ENCODE measurements at regions of chr7 and their contacts with region 1.

Region 1: GRCh38 chr7:114825423-114825951 is 96.4 kb upstream of the MDFIC start:
- DNase-seq: peak; percentile 41
- H3K4me3 Mint-ChIP-seq: peak overlapping the region; percentile 7
- H3K27ac Mint-ChIP-seq: peak overlapping the region; percentile 95
- H3K4me1 Mint-ChIP-seq: peaks cover 28% of the 10 kb centered on the region
- H3K27me3 Mint-ChIP-seq: no peaks in the 10 kb centered on the region

Region 2: GRCh38 chr7:114799628-114800028 is 25.9 kb before region 1 on chr7:
- intact Hi-C with region 1: loop called (anchors 1 kb)
- DNase-seq: no peak
- H3K4me3 Mint-ChIP-seq: no peak overlapping the region
- H3K27ac Mint-ChIP-seq: peak overlapping the region; percentile 95
- H3K4me1 Mint-ChIP-seq: peaks cover 58% of the 10 kb centered on the region
- H3K27me3 Mint-ChIP-seq: no peaks in the 10 kb centered on the region

Region 3: DNA sequence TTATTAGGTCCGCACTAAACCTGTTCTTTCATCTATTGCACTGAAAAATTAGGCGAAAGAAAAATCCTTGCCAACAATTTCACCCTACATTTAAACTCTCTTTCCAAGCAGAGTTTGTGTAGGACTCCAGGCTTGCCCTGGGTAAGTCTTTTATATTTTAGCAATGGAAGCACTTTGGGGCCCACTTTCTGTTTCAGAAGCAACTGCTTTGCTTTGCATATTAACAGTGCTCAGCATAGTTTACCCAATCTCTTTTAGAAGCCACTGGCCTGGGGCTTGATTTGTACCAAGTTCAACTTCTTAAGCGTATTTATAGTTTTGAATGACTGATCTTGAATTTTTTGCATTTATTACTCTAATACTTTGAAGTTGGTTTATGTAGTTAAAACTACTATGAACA is 17.6 kb after region 1 on chr7:
- intact Hi-C with region 1: no loop called
- DNase-seq: no peak
- H3K4me3 Mint-ChIP-seq: no peak overlapping the region
- H3K27ac Mint-ChIP-seq: no peak overlapping the region
- H3K4me1 Mint-ChIP-seq: peaks cover 13% of the 10 kb centered on the region
- H3K27me3 Mint-ChIP-seq: peaks cover 2% of the 10 kb centered on the region

Measured in activated T-helper 2 cell treated with anti-CD3 and anti-CD28 coated beads, Interferon-gamma antibody, Interleukin-2, Interleukin-4, amounts not matched to agents 10 μg/mL and 5 μg/mL and 100 μg/mL, durations not matched to agents 14 hours and 24 hours and 36 hours (primary cell).